ENCODE measurements at regions of chr6 and their contacts with region 1.

Region 1: DNA sequence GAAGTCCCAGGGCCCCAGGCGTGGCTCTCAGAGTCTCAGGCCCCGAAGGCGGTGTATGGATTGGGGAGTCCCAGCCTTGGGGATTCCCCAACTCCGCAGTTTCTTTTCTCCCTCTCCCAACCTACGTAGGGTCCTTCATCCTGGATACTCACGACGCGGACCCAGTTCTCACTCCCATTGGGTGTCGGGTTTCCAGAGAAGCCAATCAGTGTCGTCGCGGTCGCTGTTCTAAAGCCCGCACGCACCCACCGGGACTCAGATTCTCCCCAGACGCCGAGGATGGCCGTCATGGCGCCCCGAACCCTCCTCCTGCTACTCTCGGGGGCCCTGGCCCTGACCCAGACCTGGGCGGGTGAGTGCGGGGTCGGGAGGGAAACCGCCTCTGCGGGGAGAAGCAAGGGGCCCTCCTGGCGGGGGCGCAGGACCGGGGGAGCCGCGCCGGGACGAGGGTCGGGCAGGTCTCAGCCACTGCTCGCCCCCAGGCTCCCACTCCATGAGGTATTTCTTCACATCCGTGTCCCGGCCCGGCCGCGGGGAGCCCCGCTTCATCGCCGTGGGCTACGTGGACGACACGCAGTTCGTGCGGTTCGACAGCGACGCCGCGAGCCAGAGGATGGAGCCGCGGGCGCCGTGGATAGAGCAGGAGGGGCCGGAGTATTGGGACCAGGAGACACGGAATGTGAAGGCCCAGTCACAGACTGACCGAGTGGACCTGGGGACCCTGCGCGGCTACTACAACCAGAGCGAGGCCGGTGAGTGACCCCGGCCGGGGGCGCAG is at the start of gene HLA-A:
- DNase-seq: peak; percentile 88
- H3K4me3 Mint-ChIP-seq: peak within 1 kb of the TSS; percentile 95
- H3K27ac Mint-ChIP-seq: peak within 1 kb of the TSS; percentile 98
- H3K4me1 Mint-ChIP-seq: peaks cover 57% of the 10 kb centered on the region
- H3K27me3 Mint-ChIP-seq: no peaks in the 10 kb centered on the region
- total RNA-seq, gene HLA-A: 1,482 and 1,503 TPM in 2 replicates

Region 2: DNA sequence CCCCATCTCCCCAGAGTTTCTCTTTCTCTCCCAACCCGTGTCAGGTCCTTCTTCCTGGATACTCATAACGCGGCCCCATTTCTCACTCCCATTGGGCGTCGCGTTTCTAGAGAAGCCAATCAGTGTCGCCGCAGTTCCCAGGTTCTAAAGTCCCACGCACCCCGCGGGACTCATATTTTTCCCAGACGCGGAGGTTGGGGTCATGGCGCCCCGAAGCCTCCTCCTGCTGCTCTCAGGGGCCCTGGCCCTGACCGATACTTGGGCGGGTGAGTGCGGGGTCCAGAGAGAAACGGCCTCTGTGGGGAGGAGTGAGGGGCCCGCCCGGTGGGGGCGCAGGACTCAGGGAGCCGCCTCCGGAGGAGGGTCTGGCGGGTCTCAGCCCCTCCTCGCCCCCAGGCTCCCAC is 219.2 kb before region 1 on chr6 and contains the start of gene HLA-F:
- intact Hi-C with region 1: loop called (anchors 5 kb)
- DNase-seq: peak; percentile 85
- H3K4me3 Mint-ChIP-seq: peak within 1 kb of the TSS; percentile 96
- H3K27ac Mint-ChIP-seq: peak within 1 kb of the TSS; percentile 92
- H3K4me1 Mint-ChIP-seq: peaks cover 53% of the 10 kb centered on the region
- H3K27me3 Mint-ChIP-seq: no peaks in the 10 kb centered on the region
- total RNA-seq, gene HLA-F: 293 and 314 TPM in 2 replicates

Region 3: GRCh38 chr6:29887819-29888776 is 54.4 kb before region 1 on chr6:
- intact Hi-C with region 1: loop called (anchors 1 kb)
- DNase-seq: peak; percentile 83
- H3K4me3 Mint-ChIP-seq: peak overlapping the region; percentile 87
- H3K27ac Mint-ChIP-seq: peak overlapping the region; percentile 93
- H3K4me1 Mint-ChIP-seq: peaks cover 17% of the 10 kb centered on the region
- H3K27me3 Mint-ChIP-seq: peaks cover 9% of the 10 kb centered on the region

Region 4: DNA sequence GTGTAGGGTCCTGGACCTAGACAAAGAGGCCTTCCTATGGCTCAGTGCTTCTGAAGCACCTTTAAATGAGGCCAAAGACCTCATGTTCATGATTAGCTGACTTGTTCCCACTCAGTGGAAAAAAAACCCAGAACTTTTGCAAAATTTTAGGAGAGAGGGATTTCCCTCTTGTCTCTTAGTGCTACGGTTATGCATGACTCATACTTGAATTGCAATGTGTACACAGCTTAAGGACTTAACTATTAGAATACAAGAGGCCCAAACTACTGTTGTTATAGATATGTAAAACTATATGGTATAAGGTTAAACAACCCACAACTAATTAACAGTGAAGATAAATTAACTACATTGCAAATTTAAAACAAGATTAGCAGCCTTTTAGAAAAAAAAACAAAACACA is 32.5 kb before region 1 on chr6:
- intact Hi-C with region 1: no loop called
- DNase-seq: no peak
- H3K4me3 Mint-ChIP-seq: no peak overlapping the region
- H3K27ac Mint-ChIP-seq: no peak overlapping the region
- H3K4me1 Mint-ChIP-seq: peaks cover 42% of the 10 kb centered on the region
- H3K27me3 Mint-ChIP-seq: peaks cover 16% of the 10 kb centered on the region

Region 5: DNA sequence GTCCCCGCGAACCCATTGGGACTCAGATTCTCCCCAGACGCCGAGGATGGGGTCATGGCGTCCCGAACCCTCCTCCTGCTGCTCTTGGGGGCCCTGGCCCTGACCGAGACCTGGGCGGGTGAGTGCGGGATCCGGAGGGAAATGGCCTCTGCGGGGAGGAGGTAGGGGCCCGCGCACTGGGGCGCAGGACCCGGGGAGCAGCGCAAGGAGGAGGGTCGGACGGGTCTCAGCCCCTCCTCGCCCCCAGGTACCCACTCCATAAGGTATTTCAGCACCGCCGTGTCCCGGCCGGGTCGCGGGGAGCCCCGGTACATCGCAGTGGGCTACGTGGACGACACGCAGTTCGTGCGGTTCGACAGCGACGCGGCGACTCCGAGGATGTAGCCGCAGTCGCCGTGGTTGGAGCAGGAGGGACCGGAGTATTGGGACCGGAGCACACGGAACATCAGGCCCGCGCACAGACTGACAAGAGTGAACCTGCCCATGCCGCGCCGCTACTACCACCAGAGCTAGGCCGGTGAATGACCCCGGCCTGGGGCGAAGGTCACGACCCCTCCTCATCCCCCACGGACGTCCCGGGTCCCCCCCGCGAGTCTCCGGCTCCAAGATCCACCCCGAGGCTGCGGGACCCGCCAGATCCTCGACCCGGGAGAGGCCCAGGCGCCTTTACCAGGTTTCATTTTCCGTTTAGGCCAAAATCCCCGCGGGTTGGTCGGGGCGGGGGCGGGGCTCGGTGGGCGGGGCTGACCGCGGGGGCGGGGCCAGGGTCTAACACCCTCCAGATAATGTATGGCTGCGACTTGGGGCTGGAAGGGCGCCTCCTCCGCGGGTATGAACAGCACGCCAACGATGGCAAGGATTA is 15.8 kb before region 1 on chr6:
- intact Hi-C with region 1: loop called (anchors 1 kb)
- DNase-seq: peak; percentile 79
- H3K4me3 Mint-ChIP-seq: peak overlapping the region; percentile 92
- H3K27ac Mint-ChIP-seq: peak overlapping the region; percentile 98
- H3K4me1 Mint-ChIP-seq: peaks cover 51% of the 10 kb centered on the region
- H3K27me3 Mint-ChIP-seq: peaks cover 4% of the 10 kb centered on the region

Region 6: GRCh38 chr6:29976588-29977424 is 34.3 kb after region 1 on chr6:
- intact Hi-C with region 1: loop called (anchors 5 kb)
- DNase-seq: peak; percentile 44
- H3K4me3 Mint-ChIP-seq: peak overlapping the region; percentile 87
- H3K27ac Mint-ChIP-seq: peak overlapping the region; percentile 57
- H3K4me1 Mint-ChIP-seq: peaks cover 45% of the 10 kb centered on the region
- H3K27me3 Mint-ChIP-seq: peaks cover 56% of the 10 kb centered on the region

Region 7: DNA sequence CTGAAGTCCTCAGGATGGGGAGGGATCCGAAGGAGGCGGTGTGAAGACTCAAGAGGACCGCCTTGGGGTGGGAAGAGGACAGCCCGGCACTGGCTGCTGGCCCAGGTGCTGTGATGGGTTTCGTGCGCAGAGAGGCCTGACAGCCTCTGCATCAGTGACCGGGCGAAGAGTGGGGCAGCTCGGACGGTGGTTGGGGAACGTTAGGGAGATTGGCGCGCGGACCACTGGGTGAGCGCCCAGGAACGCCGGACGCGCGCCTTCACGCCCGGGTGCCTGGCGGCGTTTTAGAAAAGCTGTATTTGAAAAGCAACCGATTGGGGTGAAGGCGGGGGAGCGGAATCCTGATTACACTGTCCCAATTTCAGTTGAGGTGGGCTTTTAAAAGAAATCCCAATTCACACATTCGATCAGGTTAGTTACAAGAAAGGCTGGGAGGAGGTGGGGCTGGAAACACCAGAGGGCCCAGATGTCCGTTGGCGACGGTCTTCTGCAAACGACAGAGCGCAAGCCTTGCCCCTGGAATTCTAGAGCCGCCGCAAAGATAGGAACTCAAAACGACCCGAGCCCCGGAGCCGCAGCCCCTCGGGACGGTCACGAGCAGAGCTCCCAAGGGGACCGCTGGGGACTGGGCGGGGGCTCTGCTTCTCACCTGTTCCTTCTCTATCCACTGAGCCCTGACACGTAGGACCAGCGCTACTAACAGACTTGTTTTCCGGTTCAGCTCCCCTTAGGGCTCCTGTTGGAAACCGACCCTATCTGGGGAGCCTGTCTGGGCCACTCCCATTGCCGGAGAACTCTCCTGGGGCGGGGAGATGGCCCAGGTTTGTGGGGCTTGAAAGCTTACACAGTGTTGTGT is 185.0 kb after region 1 on chr6:
- intact Hi-C with region 1: no loop called
- DNase-seq: no peak
- H3K4me3 Mint-ChIP-seq: no peak overlapping the region
- H3K27ac Mint-ChIP-seq: peak overlapping the region; percentile 21
- H3K4me1 Mint-ChIP-seq: peaks cover 25% of the 10 kb centered on the region
- H3K27me3 Mint-ChIP-seq: peaks cover 61% of the 10 kb centered on the region